A549 (cell line): ENCODE measurements at regions of chr3 and their contacts with region 1.

Region 1: GRCh38 chr3:154334973-154335420 is 10.7 kb upstream of the DHX36 start:
- DNase-seq: peak; percentile 45 to 53
- ATAC-seq: peak in 1 of 2 experiments; percentile 74; a peak in 3 of 6 replicates
- H3K4me3 ChIP-seq: no peak overlapping the region
- H3K27ac ChIP-seq: no peak overlapping the region
- H3K4me1 ChIP-seq: no peaks in the 10 kb centered on the region
- CTCF ChIP-seq: peak; percentile 57
- EP300 ChIP-seq: no peak
- POLR2A ChIP-seq: no peak
- RAD21 ChIP-seq: peak; percentile 29 to 46; a peak in 4 of 5 replicates

Region 2: DNA sequence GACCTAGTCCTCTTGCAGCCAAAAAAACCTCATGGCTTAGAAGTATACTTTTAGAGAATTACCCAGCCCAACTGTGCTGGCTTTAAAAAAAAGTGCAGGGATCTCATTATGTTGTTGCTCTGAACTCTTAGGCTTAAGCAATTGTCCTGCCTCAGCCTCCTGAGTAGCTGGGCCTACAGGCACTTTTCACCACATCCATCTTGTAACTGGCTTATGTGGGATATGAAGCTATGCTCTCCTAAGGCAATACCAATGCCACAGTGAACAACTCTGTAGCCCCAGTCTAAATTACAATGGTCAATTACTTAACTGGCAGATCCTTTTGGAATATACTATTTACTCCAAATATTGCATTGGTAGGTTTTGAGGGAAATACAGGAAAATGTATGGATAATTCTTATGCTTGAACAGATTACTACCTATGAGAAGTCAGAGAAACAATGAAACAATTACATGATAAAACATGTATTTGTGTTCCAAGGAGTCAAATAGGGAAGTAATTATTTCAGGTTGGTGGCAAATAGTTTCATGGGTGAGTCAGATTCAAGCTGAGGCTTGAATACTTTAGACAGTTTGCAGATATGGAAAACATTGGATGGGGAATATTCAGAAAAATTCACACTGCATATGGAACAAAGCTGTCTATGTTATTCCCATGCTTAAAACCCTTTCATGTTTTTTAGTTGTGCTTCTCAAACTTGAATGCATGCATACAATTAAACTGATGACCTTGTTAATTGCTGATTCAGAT is 129.6 kb after region 1 on chr3:
- CTCF ChIA-PET with region 1: no interaction called
- POLR2A ChIA-PET with region 1: no interaction called
- DNase-seq: no peak
- ATAC-seq: no peak
- H3K4me3 ChIP-seq: no peak overlapping the region
- H3K27ac ChIP-seq: no peak overlapping the region
- H3K4me1 ChIP-seq: no peaks in the 10 kb centered on the region
- CTCF ChIP-seq: no peak
- EP300 ChIP-seq: no peak
- POLR2A ChIP-seq: no peak
- RAD21 ChIP-seq: no peak

Region 3: GRCh38 chr3:155323063-155323666 is 988.2 kb after region 1 on chr3:
- CTCF ChIA-PET with region 1: interaction called, 14 read pairs
- POLR2A ChIA-PET with region 1: no interaction called
- DNase-seq: peak; percentile 53 to 78
- ATAC-seq: peak; percentile 89 to 91
- H3K4me3 ChIP-seq: no peak overlapping the region
- H3K27ac ChIP-seq: no peak overlapping the region
- H3K4me1 ChIP-seq: no peaks in the 10 kb centered on the region
- CTCF ChIP-seq: peak; percentile 87
- EP300 ChIP-seq: no peak
- POLR2A ChIP-seq: no peak
- RAD21 ChIP-seq: peak; percentile 88 to 91